PC-9 (cell line): ENCODE measurements at regions of chr19 and their contacts with region 1.

Region 1: GRCh38 chr19:39435499-39436349 is at the start of gene RPS16:
- DNase-seq: peak; percentile 91 to 99
- H3K4me3 ChIP-seq: peak within 1 kb of the TSS; percentile 91
- H3K27ac ChIP-seq: peak within 1 kb of the TSS; percentile 97
- H3K4me1 ChIP-seq: peaks cover 58% of the 10 kb centered on the region
- H3K27me3 ChIP-seq: no peaks in the 10 kb centered on the region
- CTCF ChIP-seq: no peak
- total RNA-seq, gene RPS16: 2,510 and 2,860 TPM in 2 replicates

Region 2: DNA sequence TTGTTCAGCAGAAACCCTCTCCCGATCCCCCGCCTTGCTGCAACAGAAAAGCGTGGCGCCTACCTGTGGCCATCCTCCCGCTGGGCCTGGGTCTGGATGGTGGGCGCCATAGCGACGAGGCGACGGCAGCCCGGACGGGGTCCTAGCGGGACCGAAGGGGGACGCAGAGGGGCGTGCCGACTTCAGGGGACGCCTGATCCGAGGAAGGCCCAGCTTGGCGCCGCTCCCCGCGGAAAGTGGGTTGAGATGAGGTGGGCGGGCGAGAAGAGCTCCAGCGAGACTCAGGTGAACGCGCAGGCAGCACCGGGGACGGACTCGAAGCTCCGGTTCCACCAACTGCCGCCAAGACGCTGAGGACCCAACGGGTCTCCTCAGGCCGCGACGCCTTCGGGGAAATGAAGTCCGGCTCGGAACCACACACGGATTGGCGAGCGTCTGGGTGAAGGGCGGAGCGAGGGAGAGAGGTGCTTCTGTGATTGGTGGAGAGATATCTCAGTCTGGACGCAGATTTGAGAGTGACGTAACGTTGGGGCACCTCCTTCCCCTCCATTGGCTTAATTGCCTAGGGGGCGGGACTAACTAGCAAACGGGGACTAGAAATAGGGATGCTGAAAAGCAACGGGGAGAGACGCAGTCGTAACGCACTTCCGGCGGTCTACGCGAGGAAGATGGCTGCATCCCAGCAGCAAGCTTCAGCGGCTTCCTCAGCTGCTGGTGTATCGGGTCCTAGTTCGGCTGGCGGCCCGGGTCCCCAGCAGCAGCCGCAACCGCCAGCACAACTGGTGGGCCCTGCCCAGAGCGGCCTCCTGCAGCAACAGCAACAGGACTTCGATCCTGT is 44.8 kb before region 1 on chr19 and contains the starts of genes MED29 and PAF1:
- CTCF ChIA-PET with region 1: interaction called, 5 read pairs
- POLR2A ChIA-PET with region 1: interaction called, 18 read pairs
- intact Hi-C with region 1: no loop called
- DNase-seq: peak; percentile 96 to 98
- H3K4me3 ChIP-seq: peak within 1 kb of the TSS; percentile 97
- H3K27ac ChIP-seq: peak within 1 kb of the TSS; percentile 86
- H3K4me1 ChIP-seq: peaks cover 14% of the 10 kb centered on the region
- H3K27me3 ChIP-seq: no peaks in the 10 kb centered on the region
- CTCF ChIP-seq: no peak; the same call in 1 of the 2 replicates
- total RNA-seq, gene MED29: 18.6 and 30.9 TPM in 2 replicates
- total RNA-seq, gene PAF1: 54.3 and 61.1 TPM in 2 replicates

Region 3: GRCh38 chr19:39397360-39398296 is 38.1 kb before region 1 on chr19:
- CTCF ChIA-PET with region 1: interaction called, 3 read pairs
- POLR2A ChIA-PET with region 1: interaction called, 12 read pairs
- intact Hi-C with region 1: no loop called
- DNase-seq: peak; percentile 60 to 85
- H3K4me3 ChIP-seq: peak overlapping the region; percentile 17; the same call in 1 of the 2 replicates
- H3K27ac ChIP-seq: peak overlapping the region; percentile 95
- H3K4me1 ChIP-seq: peaks cover 24% of the 10 kb centered on the region
- H3K27me3 ChIP-seq: no peaks in the 10 kb centered on the region
- CTCF ChIP-seq: peak; percentile 93

Region 4: GRCh38 chr19:39403331-39404312 is 32.1 kb before region 1 on chr19:
- CTCF ChIA-PET with region 1: interaction called, 3 read pairs
- POLR2A ChIA-PET with region 1: interaction called, 18 read pairs
- intact Hi-C with region 1: loop called (anchors 2 kb)
- DNase-seq: peak; percentile 93 to 99
- H3K4me3 ChIP-seq: peak overlapping the region; percentile 82
- H3K27ac ChIP-seq: peak overlapping the region; percentile 98
- H3K4me1 ChIP-seq: peaks cover 51% of the 10 kb centered on the region
- H3K27me3 ChIP-seq: no peaks in the 10 kb centered on the region
- CTCF ChIP-seq: no peak

Region 5: DNA sequence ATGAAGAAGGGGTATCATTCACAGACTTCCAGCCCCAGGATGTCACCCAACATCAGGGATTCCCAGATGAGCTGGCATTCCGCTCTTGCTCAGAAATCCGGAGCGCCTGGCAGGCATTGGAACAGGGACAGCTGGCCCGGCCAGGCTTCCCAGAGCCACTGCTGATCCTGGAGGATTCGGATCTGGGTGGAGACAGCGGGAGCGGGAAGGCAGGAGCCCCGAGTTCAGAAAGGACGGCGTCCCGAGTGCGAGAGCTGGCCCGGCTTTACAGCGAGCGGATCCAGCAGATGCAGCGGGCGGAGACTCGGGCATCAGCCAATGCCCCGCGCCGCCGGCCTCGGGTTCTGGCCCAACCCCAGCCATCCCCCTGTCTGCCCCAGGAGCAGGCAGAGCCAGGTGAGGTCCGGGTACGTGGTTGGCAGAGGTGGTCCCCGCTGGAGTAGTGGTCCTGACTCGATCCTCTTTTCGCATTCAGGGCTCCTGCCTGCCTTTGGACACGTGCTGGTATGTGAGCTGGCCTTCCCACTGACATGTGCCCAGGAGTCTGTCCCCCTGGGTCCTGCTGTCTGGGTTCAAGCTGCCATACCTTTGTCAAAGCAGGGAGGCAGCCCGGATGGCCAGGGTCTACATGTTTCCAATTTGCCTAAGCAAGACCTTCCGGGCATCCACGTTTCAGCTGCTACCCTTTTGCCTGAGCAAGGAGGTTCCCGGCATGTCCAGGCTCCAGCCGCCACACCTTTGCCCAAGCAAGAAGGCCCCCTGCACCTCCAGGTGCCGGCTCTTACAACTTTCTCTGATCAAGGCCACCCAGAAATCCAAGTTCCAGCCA is 12.3 kb before region 1 on chr19:
- CTCF ChIA-PET with region 1: no interaction called
- POLR2A ChIA-PET with region 1: no interaction called
- intact Hi-C with region 1: no loop called
- DNase-seq: peak in 1 of 2 experiments; percentile 18
- H3K4me3 ChIP-seq: no peak overlapping the region
- H3K27ac ChIP-seq: no peak overlapping the region
- H3K4me1 ChIP-seq: no peaks in the 10 kb centered on the region
- H3K27me3 ChIP-seq: no peaks in the 10 kb centered on the region
- CTCF ChIP-seq: no peak

Region 6: GRCh38 chr19:39515551-39516191 is 79.9 kb after region 1 on chr19:
- CTCF ChIA-PET with region 1: interaction called, 20 read pairs
- POLR2A ChIA-PET with region 1: interaction called, 19 read pairs
- intact Hi-C with region 1: no loop called
- DNase-seq: no peak
- H3K4me3 ChIP-seq: no peak overlapping the region
- H3K27ac ChIP-seq: no peak overlapping the region
- H3K4me1 ChIP-seq: no peaks in the 10 kb centered on the region
- H3K27me3 ChIP-seq: peaks cover 3% of the 10 kb centered on the region; the same call in 1 of the 2 replicates
- CTCF ChIP-seq: no peak

Region 7: GRCh38 chr19:39607558-39607957 is 171.8 kb after region 1 on chr19:
- CTCF ChIA-PET with region 1: no interaction called
- POLR2A ChIA-PET with region 1: no interaction called
- intact Hi-C with region 1: no loop called
- DNase-seq: no peak
- H3K4me3 ChIP-seq: no peak overlapping the region
- H3K27ac ChIP-seq: no peak overlapping the region
- H3K4me1 ChIP-seq: no peaks in the 10 kb centered on the region
- H3K27me3 ChIP-seq: peaks cover 68% of the 10 kb centered on the region
- CTCF ChIP-seq: no peak

Region 8: GRCh38 chr19:39833464-39834286 is 398.0 kb after region 1 on chr19 and contains the start of gene DYRK1B:
- CTCF ChIA-PET with region 1: no interaction called
- POLR2A ChIA-PET with region 1: interaction called, 13 read pairs
- intact Hi-C with region 1: no loop called
- DNase-seq: peak in 1 of 2 experiments; percentile 95
- H3K4me3 ChIP-seq: no peak within 1 kb of the TSS
- H3K27ac ChIP-seq: no peak within 1 kb of the TSS
- H3K4me1 ChIP-seq: no peaks in the 10 kb centered on the region
- H3K27me3 ChIP-seq: no peaks in the 10 kb centered on the region
- CTCF ChIP-seq: no peak
- total RNA-seq, gene DYRK1B: 29.9 and 39.5 TPM in 2 replicates

Region 9: GRCh38 chr19:39970675-39971379 is 535.1 kb after region 1 on chr19 and contains the start of gene PSMC4:
- CTCF ChIA-PET with region 1: no interaction called
- POLR2A ChIA-PET with region 1: interaction called, 16 read pairs
- intact Hi-C with region 1: no loop called
- DNase-seq: peak; percentile 95 to 98
- H3K4me3 ChIP-seq: peak within 1 kb of the TSS; percentile 90
- H3K27ac ChIP-seq: peak within 1 kb of the TSS; percentile 71
- H3K4me1 ChIP-seq: peaks cover 18% of the 10 kb centered on the region
- H3K27me3 ChIP-seq: no peaks in the 10 kb centered on the region
- CTCF ChIP-seq: peak; percentile 63
- total RNA-seq, gene PSMC4: 82.8 and 110 TPM in 2 replicates